ENCODE measurements at regions of chr11 and their contacts with region 1.

Region 1: DNA sequence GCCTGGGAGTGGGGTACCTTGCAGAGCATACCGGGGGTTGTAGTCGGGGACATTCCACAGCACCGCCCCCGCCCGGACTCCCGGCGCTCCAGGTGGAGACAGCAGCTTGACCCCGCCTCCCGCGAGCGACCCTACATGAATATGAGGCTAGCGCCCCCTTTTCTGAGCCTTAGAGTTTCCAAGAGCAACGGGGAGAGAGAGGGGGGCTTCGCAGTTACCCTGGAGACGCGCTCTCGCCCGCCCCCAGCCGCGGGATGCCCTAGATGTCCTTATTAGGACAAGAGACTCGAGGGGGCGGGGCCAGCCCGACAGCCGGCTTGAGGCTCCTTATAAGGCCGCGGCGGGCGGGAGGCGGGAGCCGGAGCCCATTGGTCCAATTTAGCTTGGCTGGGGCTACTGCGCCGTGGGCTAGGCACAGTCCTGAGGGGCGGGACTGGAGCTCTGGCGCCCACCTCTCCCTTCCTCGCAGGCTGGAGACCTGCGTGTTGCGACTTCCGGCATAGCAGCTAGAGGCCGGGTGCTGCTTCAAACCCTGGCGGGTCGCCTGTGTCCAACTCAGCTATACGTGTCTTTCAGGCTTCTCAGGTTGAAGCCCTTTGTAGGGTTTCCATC is 927 bp upstream of the MUS81 start:
- DNase-seq: peak; percentile 99
- ATAC-seq: peak; percentile 63
- H3K4me3 ChIP-seq: peak overlapping the region; percentile 79
- H3K27ac ChIP-seq: peak overlapping the region; percentile 74
- H3K4me1 ChIP-seq: peaks cover 41% of the 10 kb centered on the region
- H3K27me3 ChIP-seq: no peaks in the 10 kb centered on the region
- CTCF ChIP-seq: no peak

Region 2: DNA sequence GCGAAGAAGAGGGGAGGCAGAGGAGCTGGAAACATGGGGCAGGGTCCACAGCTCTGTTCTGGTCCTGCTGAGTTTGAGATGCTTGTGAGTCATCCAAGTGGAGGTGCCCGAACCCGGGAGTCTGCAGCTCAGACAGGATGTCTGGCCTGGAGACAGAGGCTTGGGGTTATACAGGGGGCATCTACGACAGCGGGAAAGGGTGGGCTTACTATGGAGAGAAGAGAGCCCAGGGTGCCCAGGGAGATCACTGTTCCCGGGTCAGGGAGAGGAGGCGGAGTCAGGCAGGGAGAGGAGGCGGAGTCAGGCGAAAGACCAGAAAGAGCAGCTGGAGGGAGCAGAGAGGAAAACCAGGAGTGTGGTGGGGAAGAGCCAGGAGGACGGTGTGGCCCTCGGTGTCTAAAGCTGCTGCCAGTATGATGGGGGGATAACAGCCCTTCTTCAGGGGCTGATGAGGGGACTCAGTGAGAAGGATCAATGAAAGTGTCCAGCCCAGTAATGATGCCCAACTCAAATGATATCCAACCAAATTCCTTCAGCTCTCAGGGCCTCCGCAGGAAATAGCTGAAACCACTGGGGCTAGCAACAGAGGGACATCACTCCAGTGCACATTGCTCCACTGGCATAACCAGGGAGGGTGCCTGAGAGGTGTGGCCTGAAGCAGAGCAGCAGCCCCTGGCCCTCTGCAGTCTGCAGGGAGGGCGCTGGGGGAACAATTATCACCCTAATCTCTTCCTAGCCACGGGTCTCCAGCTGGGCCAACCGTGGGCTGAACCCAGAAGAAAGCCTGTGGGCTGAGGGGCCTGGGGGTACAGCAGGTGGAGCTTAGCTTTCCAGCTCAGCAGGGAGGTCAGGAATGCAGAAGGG is 298.5 kb before region 1 on chr11:
- CTCF ChIA-PET with region 1: no interaction called
- POLR2A ChIA-PET with region 1: no interaction called
- intact Hi-C with region 1: no loop called
- DNase-seq: peak; percentile 56
- ATAC-seq: peak; percentile 3; the same call in 1 of the 2 replicates
- H3K4me3 ChIP-seq: peak overlapping the region; percentile 28; the same call in 1 of the 2 replicates
- H3K27ac ChIP-seq: peak overlapping the region; percentile 91
- H3K4me1 ChIP-seq: peaks cover 52% of the 10 kb centered on the region
- H3K27me3 ChIP-seq: no peaks in the 10 kb centered on the region
- CTCF ChIP-seq: no peak

Region 3: DNA sequence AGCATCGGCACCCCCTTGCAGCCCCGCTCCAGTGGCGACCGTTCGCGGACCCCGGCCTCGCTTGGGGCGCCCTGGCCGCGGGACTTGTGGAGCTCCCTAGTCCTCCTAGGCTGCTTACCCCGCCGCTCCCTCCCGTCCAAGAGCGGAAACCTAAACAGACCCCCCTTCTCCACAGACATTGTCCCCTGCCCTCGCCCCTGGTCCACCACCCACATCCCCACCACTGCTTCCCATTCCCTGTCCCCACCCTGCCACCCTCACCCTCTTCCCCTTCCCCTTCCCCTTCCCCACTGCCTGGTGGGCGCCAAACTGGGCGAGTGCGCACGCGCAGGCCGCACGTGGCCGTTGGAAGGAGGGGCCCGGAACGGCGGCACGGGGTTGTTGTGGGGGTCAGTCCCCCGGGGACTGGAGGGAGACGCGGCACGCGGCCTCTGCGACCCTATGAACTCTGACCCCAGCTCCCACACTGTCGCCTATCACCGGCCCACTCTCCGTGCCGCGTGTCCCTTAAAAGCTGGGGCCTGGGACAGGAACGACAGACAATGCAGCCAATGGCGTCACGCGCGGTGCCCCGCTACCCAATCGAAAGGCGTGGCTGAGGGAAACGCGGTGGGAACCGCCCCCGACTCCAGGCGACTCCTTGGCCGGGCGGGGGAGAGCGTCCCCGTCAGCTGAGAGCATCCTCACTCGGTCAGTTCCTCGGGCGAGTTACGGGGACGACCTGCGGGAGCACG is 25.8 kb before region 1 on chr11 and contains the start of gene SNX32:
- CTCF ChIA-PET with region 1: interaction called, 3 read pairs
- POLR2A ChIA-PET with region 1: interaction called, 11 read pairs
- intact Hi-C with region 1: no loop called
- DNase-seq: peak; percentile 82
- ATAC-seq: peak; percentile 99
- H3K4me3 ChIP-seq: peak within 1 kb of the TSS; percentile 43; the same call in 1 of the 2 replicates
- H3K27ac ChIP-seq: no peak within 1 kb of the TSS
- H3K4me1 ChIP-seq: no peaks in the 10 kb centered on the region
- H3K27me3 ChIP-seq: peaks cover 20% of the 10 kb centered on the region; the same call in 1 of the 2 replicates
- CTCF ChIP-seq: no peak
- total RNA-seq, gene SNX32: not detected in 2 replicates

Region 4: DNA sequence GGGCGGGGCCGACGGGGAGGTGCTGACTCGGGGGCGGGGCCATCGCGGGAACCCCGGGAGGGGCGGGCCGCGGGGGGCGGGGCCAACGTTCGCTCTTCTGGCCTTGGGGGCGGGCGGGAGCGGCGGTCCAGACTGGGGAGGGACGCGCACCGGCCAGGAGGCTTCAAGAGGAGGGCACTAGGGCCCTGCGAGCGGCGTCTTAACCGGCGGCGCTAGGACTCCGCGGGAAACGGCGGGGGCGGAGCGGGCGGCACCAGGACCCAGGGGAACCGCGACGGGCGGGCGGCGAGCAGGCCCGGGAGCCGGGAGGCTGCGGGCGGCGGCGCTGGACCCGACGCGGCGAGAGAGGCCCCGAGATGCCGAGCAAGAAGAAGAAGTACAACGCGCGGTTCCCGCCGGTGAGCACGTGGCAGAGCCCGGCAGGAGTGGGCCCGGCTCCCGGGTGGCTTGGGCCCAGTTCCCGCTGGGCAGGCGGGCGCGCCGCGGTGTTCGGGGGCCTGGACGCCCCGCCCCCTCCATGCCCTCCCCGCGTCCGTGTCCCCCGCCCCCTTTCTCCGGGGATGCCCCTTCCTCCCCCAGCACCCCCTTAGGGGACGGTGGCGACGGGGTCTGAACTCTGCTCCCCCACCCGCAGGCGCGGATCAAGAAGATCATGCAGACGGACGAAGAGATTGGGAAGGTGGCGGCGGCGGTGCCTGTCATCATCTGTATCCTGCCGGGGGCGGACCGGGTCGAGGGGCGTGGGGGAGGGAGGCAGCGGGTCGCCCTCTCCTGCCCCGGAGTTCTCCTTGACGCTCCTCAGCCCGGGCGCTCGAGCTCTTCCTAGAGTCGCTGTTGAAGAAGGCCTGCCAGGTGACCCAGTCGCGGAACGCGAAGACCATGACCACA is 60.1 kb after region 1 on chr11 and contains the start of gene DRAP1:
- CTCF ChIA-PET with region 1: no interaction called
- POLR2A ChIA-PET with region 1: no interaction called
- intact Hi-C with region 1: no loop called
- DNase-seq: peak; percentile 98
- ATAC-seq: peak; percentile 53
- H3K4me3 ChIP-seq: peak within 1 kb of the TSS; percentile 82
- H3K27ac ChIP-seq: peak within 1 kb of the TSS; percentile 93
- H3K4me1 ChIP-seq: peaks cover 46% of the 10 kb centered on the region
- H3K27me3 ChIP-seq: no peaks in the 10 kb centered on the region
- CTCF ChIP-seq: no peak
- total RNA-seq, gene DRAP1: 944 and 1,531 TPM in 2 replicates